AG04450 (cell line): ENCODE measurements at regions of chr1 and their contacts with region 1.

Region 1: DNA sequence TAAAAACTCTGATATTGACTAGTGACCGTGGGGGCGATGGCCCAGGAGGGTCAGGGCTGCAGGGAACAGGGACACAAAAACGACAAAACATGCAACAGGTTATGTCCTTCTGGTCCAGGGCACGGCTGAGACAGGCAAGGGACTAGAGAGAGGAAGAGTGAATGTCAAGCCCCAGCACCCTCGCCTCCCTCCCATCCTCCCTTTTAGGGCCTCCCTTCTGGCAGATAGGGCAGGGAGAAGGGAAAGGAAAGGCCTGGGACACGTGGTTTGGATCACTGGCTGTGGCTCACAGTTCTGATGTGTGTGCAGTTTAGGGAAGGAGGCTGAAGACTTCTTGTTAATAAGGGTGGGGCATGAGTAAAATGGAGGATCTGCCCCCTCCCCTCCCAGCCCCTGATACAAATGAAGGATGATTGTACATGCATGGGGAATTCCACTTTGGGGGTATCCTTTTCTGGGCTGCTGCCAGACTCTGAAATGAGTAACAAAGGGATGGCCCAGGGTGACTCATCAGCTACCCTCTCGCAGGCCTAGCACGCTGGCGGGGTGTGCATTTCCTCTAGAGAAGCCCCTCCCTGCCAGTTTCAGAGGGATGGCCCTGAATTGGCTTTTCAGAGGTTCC is 14.2 kb downstream of the CAPN2 start:
- DNase-seq: peak; percentile 90
- H3K4me3 ChIP-seq: peak overlapping the region; percentile 22; the same call in 1 of the 2 replicates
- H3K27ac ChIP-seq: peak overlapping the region; percentile 91
- H3K27me3 ChIP-seq: no peaks in the 10 kb centered on the region
- CTCF ChIP-seq: no peak

Region 2: GRCh38 chr1:223707256-223708000 is 19.1 kb before region 1 on chr1:
- CTCF ChIA-PET with region 1: interaction called, 5 read pairs
- POLR2A ChIA-PET with region 1: interaction called, 11 read pairs
- DNase-seq: peak; percentile 98
- H3K4me3 ChIP-seq: peak overlapping the region; percentile 20; the same call in 1 of the 2 replicates
- H3K27ac ChIP-seq: peak overlapping the region; percentile 99
- H3K27me3 ChIP-seq: no peaks in the 10 kb centered on the region
- CTCF ChIP-seq: no peak